CD8-positive, alpha-beta T cell (primary cell): ENCODE measurements at regions of chr6 and their contacts with region 1.

Region 1: DNA sequence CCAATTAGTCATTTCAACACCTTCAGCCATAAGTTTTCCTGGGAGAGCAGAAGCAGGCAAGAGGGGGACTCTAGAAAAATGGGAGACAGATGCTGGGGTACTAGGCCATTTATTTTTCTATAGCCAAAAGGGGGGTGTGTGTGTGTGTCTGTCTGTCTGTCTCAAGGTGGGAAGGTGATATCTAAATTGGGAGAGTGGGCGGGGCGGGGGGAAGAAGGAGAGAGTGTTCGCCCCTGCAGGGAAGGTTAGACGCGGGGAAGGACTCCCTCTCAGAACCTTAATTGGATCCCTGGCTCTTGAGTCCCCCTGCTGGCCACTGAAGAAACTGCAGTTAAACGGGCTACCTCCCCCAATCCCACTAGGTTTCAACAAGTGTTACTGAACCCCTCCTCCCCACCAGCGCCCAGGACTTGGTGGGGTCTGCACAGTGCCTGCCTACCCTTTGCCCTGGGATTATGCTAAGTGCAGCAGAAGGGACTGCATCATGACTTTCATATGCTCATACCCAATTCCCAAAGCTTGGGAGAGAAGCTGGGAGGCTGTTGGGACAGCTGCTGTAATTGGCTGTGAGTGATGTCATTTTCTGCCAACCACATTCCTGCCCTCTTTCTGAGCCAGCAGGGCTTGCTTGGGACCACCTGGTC is 45.8 kb downstream of the FOXP4 start:
- DNase-seq: peak; percentile 65 to 88 (median 76)
- ATAC-seq: peak; percentile 87
- H3K4me3 ChIP-seq: no peak overlapping the region
- H3K4me3 Mint-ChIP-seq: no peak overlapping the region
- H3K27ac ChIP-seq: no peak overlapping the region
- H3K27ac Mint-ChIP-seq: no peak overlapping the region
- H3K4me1 ChIP-seq: no peaks in the 10 kb centered on the region
- H3K4me1 Mint-ChIP-seq: peaks cover 2% of the 10 kb centered on the region
- H3K27me3 ChIP-seq: no peaks in the 10 kb centered on the region
- H3K27me3 Mint-ChIP-seq: no peaks in the 10 kb centered on the region
- CTCF ChIP-seq: peak; percentile 75

Region 2: GRCh38 chr6:41306187-41306854 is 285.7 kb before region 1 on chr6:
- CTCF ChIA-PET with region 1: interaction called, 3 read pairs
- POLR2A ChIA-PET with region 1: no interaction called
- intact Hi-C with region 1: loop called (anchors 2 kb)
- DNase-seq: peak in 7 of 9 experiments; percentile 19 to 78 (median 34)
- ATAC-seq: no peak
- H3K4me3 ChIP-seq: no peak overlapping the region
- H3K4me3 Mint-ChIP-seq: no peak overlapping the region
- H3K27ac ChIP-seq: no peak overlapping the region
- H3K27ac Mint-ChIP-seq: no peak overlapping the region
- H3K4me1 ChIP-seq: peaks cover 4% of the 10 kb centered on the region
- H3K4me1 Mint-ChIP-seq: peaks cover 13% of the 10 kb centered on the region
- H3K27me3 ChIP-seq: no peaks in the 10 kb centered on the region
- H3K27me3 Mint-ChIP-seq: no peaks in the 10 kb centered on the region
- CTCF ChIP-seq: peak; percentile 79

Region 3: DNA sequence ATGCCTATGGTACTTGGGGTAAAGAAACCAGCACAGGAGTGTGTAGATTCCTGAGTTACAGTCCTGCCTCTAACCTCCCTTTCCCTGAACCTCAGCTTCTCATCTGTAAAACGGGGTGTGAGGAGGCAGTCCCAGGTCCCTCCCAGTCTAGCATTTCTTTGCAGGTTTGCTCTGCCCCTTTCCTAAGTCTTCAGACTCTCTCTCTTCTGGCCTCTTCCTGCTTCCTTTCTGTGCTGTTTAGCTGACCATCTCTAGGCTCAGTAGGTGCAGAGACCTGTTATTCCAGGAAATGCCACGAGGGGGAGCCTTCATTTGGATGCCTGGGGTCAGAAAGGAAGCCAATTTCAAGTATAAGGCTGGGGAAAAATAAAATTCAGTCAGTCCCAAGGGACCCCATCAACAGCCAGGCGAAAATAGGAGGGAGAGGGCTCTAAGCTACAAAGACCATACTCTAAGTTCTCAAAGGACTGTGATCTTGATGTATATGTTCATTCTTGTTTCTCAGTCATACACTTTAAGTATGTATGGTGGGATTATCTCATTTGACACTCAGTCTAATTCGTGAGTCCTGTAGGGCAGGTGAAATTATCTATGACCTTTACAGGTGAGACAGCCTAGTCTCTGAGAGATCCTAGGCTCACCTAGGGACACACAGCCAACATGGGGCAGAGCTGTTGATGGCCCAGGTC is 167.5 kb before region 1 on chr6:
- CTCF ChIA-PET with region 1: interaction called, 160 read pairs
- POLR2A ChIA-PET with region 1: no interaction called
- intact Hi-C with region 1: loop called (anchors 1 kb)
- DNase-seq: peak; percentile 67 to 89 (median 78)
- ATAC-seq: peak; percentile 62
- H3K4me3 ChIP-seq: no peak overlapping the region
- H3K4me3 Mint-ChIP-seq: no peak overlapping the region
- H3K27ac ChIP-seq: no peak overlapping the region
- H3K27ac Mint-ChIP-seq: no peak overlapping the region
- H3K4me1 ChIP-seq: peaks cover 32% of the 10 kb centered on the region
- H3K4me1 Mint-ChIP-seq: peaks cover 9% of the 10 kb centered on the region
- H3K27me3 ChIP-seq: peaks cover 16 to 28% of the 10 kb centered on the region in 2 experiments
- H3K27me3 Mint-ChIP-seq: peaks cover 21% of the 10 kb centered on the region
- CTCF ChIP-seq: peak; percentile 91

Region 4: DNA sequence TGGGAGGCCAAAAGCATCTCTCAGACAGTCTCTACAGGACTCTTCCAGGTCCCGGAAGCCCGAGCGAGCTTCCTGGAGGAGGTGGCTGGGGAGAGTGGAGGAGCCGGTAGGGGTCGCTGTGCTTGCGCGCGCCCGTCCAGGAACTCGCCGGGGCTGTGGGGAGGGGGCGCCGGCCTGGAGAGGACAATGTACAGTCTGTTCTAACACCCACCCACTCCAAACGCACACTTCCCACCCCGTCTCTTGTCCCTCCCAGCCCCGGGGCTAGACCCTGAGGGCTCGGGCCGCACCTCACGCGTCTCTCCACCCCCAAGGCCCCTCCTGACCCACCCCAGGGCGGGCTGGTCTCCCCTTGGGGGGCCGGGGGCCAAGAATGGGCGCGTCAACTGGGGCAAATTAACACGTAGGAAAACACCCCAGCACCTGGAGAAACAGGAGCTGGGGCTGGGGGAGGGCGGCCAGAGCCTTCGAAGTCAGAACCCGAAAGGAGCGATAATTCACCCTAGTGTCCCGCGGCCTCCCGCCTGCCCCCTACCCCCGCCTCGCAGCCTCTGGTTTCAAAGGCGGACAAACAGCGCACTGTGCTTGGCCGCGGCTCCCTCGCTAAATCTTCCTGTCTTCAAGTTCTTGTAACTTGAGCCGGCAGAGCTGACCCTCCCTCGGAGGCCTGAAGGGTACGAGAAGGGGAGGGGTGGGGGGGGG is 149.0 kb before region 1 on chr6:
- CTCF ChIA-PET with region 1: interaction called, 4 read pairs
- POLR2A ChIA-PET with region 1: no interaction called
- intact Hi-C with region 1: loop called in 1 of 2 experiments (anchors 5 kb)
- DNase-seq: peak in 3 of 9 experiments; percentile 23 to 49 (median 34)
- ATAC-seq: no peak
- H3K4me3 ChIP-seq: no peak overlapping the region
- H3K4me3 Mint-ChIP-seq: peak overlapping the region; percentile 22
- H3K27ac ChIP-seq: no peak overlapping the region
- H3K27ac Mint-ChIP-seq: no peak overlapping the region
- H3K4me1 ChIP-seq: peaks cover 50% of the 10 kb centered on the region
- H3K4me1 Mint-ChIP-seq: peaks cover 47% of the 10 kb centered on the region
- H3K27me3 ChIP-seq: peaks cover 0 to 23% of the 10 kb centered on the region in 2 experiments
- H3K27me3 Mint-ChIP-seq: peaks cover 13% of the 10 kb centered on the region
- CTCF ChIP-seq: peak; percentile 34

Region 5: GRCh38 chr6:41531591-41532582 is 60.1 kb before region 1 on chr6:
- CTCF ChIA-PET with region 1: no interaction called
- POLR2A ChIA-PET with region 1: no interaction called
- intact Hi-C with region 1: loop called in 1 of 2 experiments (anchors 5 kb)
- DNase-seq: peak in 7 of 9 experiments; percentile 24 to 81 (median 63)
- ATAC-seq: peak; percentile 80
- H3K4me3 ChIP-seq: peak overlapping the region; percentile 44 to 48
- H3K4me3 Mint-ChIP-seq: peak overlapping the region; percentile 81
- H3K27ac ChIP-seq: peak overlapping the region; percentile 2 to 36
- H3K27ac Mint-ChIP-seq: peak overlapping the region; percentile 87
- H3K4me1 ChIP-seq: peaks cover 25% of the 10 kb centered on the region
- H3K4me1 Mint-ChIP-seq: peaks cover 29% of the 10 kb centered on the region
- H3K27me3 ChIP-seq: no peaks in the 10 kb centered on the region
- H3K27me3 Mint-ChIP-seq: peaks cover 11% of the 10 kb centered on the region
- CTCF ChIP-seq: no peak